ENCODE measurements at regions of chr11 and their contacts with region 1.

Region 1: DNA sequence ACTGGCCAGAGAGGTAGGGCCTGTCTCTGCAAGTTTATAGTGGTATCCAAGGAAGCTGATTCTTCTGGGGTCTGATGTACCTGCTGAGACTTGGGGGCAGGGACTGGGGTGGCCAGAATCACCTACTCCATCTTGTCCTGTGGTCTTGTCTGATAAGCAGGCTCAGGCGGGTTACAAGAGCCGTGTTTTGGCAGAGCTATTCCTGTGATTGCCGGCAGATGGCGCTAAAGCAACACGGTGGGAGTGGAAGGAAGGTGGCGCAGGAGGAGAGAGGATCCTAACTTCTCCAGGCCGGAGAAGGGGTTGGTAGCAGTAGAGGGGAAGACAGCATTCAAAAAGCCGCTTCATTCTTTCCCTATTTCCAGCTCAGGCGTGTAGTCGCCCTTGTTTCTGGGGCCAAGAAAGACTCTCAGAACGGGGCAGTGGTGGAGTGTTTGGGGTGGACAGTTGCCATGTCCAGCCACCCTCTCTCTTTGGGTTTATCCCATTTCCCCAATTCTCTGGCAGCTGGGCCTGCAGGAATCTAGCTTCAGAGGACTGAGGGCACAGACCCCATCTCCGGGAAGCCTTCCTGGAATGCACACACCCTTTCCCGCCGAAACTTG is 15.1 kb downstream of the CHRM1 start:
- DNase-seq: peak; percentile 86
- H3K4me3 ChIP-seq: no peak overlapping the region
- H3K27ac ChIP-seq: no peak overlapping the region
- H3K4me1 ChIP-seq: peaks cover 7% of the 10 kb centered on the region
- H3K27me3 ChIP-seq: peaks cover 0 to 2% of the 10 kb centered on the region in 2 experiments
- CTCF ChIP-seq: peak; percentile 97
- POLR2A ChIP-seq: no peak

Region 2: GRCh38 chr11:62645956-62646824 is 259.8 kb before region 1 on chr11 and contains the start of gene GANAB:
- CTCF ChIA-PET with region 1: no interaction called
- POLR2A ChIA-PET with region 1: no interaction called
- dilution Hi-C with region 1: no loop called
- intact Hi-C with region 1: no loop called
- DNase-seq: peak; percentile 97
- H3K4me3 ChIP-seq: peak within 1 kb of the TSS; percentile 62 to 87 (median 65)
- H3K27ac ChIP-seq: peak within 1 kb of the TSS; percentile 80
- H3K4me1 ChIP-seq: peaks cover 11% of the 10 kb centered on the region
- H3K27me3 ChIP-seq: no peaks in the 10 kb centered on the region
- CTCF ChIP-seq: no peak
- POLR2A ChIP-seq: peak; percentile 97
- total RNA-seq, gene GANAB: 357 and 389 TPM in 2 replicates

Region 3: DNA sequence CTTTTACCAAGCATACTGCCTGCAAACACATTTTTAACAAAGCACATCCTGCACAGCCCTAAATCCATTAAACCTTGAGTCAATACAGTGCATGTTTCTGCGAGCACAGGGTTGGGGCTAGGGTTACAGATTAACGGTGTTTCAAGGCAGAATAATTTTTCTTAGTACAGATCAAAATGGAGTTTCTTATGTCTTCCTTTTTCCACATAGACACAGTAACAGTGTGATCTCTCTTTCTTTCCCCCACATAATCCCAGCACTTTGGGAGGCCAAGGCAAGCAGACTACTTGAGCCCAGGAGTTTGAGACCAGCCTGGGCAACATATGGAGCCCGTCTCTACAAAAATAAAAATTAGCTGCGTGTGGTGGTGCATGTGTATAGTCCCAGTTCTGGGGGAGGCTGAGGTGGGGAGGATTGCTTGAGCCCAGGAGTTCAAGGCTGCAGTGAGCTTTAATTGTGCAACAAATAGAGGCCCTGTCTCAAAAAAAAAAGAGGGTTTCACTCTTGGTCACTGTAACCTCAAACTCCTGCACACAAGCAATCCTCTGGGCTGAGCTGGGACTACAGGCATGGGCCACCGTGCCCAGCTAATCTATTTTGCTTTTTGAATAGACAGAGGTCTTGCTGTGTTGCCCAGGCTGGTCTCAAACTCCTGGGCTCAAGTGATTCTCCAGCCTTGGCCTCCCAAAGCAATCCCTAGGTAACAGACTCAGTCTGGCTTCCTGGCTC is 45.0 kb before region 1 on chr11:
- CTCF ChIA-PET with region 1: no interaction called
- POLR2A ChIA-PET with region 1: no interaction called
- dilution Hi-C with region 1: no loop called
- intact Hi-C with region 1: no loop called
- DNase-seq: no peak
- H3K4me3 ChIP-seq: no peak overlapping the region
- H3K27ac ChIP-seq: no peak overlapping the region
- H3K4me1 ChIP-seq: peaks cover 6% of the 10 kb centered on the region
- H3K27me3 ChIP-seq: no peaks in the 10 kb centered on the region
- CTCF ChIP-seq: no peak
- POLR2A ChIP-seq: no peak

Region 4: GRCh38 chr11:62880803-62881578 is 25.0 kb before region 1 on chr11 and contains the start of gene SLC3A2:
- CTCF ChIA-PET with region 1: interaction called, 15 read pairs
- POLR2A ChIA-PET with region 1: interaction called, 4 read pairs
- dilution Hi-C with region 1: no loop called
- intact Hi-C with region 1: no loop called
- DNase-seq: peak; percentile 91
- H3K4me3 ChIP-seq: peak within 1 kb of the TSS; percentile 75 to 100 (median 95)
- H3K27ac ChIP-seq: peak within 1 kb of the TSS; percentile 100
- H3K4me1 ChIP-seq: peaks cover 45% of the 10 kb centered on the region
- H3K27me3 ChIP-seq: no peaks in the 10 kb centered on the region
- CTCF ChIP-seq: peak; percentile 63 to 89
- POLR2A ChIP-seq: peak; percentile 99
- total RNA-seq, gene SLC3A2: 190 and 208 TPM in 2 replicates

Region 5: DNA sequence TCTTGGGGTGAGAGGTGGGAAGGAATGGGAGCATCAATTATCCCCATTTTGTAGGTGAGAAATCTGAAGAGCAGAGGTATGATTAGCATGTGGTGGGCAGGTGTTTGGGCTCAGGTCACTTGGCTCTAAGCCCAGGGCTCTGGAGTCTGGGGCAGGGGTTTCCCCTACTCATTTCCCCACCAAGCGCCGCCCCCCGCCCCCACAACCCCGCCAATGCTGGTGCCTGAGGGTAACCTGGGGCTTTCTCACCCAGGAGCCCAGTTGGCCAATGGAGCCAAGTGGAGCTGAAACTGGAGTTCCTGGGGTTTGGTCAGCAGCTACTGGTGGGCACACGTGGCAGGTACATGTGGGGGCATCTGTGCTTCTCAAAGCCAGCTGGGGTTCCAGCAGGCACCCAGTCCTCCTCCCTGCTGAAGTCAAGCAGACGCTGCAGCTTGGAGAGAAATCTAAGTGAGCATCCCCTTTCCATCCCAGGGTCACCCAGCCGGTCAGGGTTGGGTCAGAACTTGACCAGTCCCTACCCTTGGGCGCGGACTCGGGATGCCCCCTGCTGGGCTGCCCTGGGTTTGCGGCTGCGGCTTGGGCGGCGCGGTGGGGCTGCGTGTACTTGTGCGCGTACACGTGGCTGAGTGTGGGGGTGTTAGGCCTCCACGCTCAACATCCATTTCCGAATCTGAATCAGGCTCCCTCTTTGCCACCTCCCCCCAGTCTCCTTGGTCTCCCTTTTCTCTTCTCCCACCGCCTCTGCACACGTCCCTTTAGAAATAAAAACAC is 16.8 kb after region 1 on chr11:
- CTCF ChIA-PET with region 1: interaction called, 51 read pairs
- POLR2A ChIA-PET with region 1: no interaction called
- dilution Hi-C with region 1: no loop called
- intact Hi-C with region 1: loop called (anchors 1 kb)
- DNase-seq: no peak
- H3K4me3 ChIP-seq: no peak overlapping the region
- H3K27ac ChIP-seq: no peak overlapping the region
- H3K4me1 ChIP-seq: peaks cover 6% of the 10 kb centered on the region
- H3K27me3 ChIP-seq: peaks cover 39 to 52% of the 10 kb centered on the region in 2 experiments
- CTCF ChIP-seq: peak; percentile 46 to 55
- POLR2A ChIP-seq: no peak

Region 6: GRCh38 chr11:63017306-63017974 is 111.4 kb after region 1 on chr11:
- CTCF ChIA-PET with region 1: interaction called, 488 read pairs
- POLR2A ChIA-PET with region 1: no interaction called
- dilution Hi-C with region 1: no loop called
- intact Hi-C with region 1: no loop called
- DNase-seq: peak; percentile 95
- H3K4me3 ChIP-seq: no peak overlapping the region
- H3K27ac ChIP-seq: no peak overlapping the region
- H3K4me1 ChIP-seq: peaks cover 10% of the 10 kb centered on the region
- H3K27me3 ChIP-seq: peaks cover 0 to 3% of the 10 kb centered on the region in 2 experiments
- CTCF ChIP-seq: no peak
- POLR2A ChIP-seq: peak; percentile 44

Region 7: DNA sequence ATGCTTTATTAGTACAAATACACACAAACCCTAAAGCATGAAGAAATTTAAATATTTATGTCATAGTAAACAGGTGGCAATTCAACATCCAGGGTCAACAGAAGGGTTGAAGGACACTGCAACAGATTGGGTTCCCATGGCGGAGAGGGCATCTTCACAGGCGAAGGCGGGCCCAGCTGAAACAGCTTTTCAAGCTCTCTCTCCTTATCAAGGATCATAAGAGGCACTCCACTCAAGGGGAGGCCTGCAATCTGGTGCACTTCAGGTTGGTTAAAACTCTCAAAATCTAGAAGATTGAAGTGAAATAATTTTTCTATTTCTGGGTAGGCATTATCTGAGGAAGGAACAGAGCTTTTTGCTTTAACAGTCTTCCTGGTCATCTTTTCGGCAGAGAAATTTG is 126.4 kb after region 1 on chr11:
- CTCF ChIA-PET with region 1: interaction called, 85 read pairs
- POLR2A ChIA-PET with region 1: no interaction called
- dilution Hi-C with region 1: no loop called
- intact Hi-C with region 1: no loop called
- DNase-seq: no peak
- H3K4me3 ChIP-seq: no peak overlapping the region
- H3K27ac ChIP-seq: no peak overlapping the region
- H3K4me1 ChIP-seq: no peaks in the 10 kb centered on the region
- H3K27me3 ChIP-seq: peaks cover 9 to 11% of the 10 kb centered on the region in 2 experiments
- CTCF ChIP-seq: no peak
- POLR2A ChIP-seq: no peak

Region 8: GRCh38 chr11:63179432-63180041 is 273.5 kb after region 1 on chr11:
- CTCF ChIA-PET with region 1: no interaction called
- POLR2A ChIA-PET with region 1: no interaction called
- dilution Hi-C with region 1: no loop called
- intact Hi-C with region 1: no loop called
- DNase-seq: peak; percentile 8
- H3K4me3 ChIP-seq: no peak overlapping the region
- H3K27ac ChIP-seq: no peak overlapping the region
- H3K4me1 ChIP-seq: peaks cover 5% of the 10 kb centered on the region
- H3K27me3 ChIP-seq: peaks cover 8 to 13% of the 10 kb centered on the region in 2 experiments
- CTCF ChIP-seq: no peak
- POLR2A ChIP-seq: no peak

Region 9: DNA sequence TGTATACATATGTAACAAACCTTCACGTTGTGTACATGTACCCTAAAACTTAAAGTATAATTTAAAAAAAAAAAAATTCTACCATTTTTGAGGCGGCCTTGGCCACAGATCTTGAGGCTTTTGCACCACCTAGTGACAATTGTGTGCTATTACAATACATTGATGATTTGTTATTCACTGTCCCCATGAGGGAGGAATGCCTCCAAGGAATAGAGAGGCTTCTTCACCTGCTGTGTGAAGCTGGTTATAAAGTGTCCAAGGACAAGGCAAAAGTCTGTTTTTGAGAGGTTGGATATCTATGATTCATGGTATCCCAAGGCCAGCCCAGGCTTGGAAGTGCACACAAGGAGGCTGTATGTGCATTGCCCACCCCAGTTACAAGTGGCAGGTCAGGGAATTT is 306.7 kb after region 1 on chr11:
- CTCF ChIA-PET with region 1: interaction called, 14 read pairs
- POLR2A ChIA-PET with region 1: no interaction called
- dilution Hi-C with region 1: no loop called
- intact Hi-C with region 1: loop called (anchors 1 kb)
- DNase-seq: peak; percentile 14
- H3K4me3 ChIP-seq: no peak overlapping the region
- H3K27ac ChIP-seq: no peak overlapping the region
- H3K4me1 ChIP-seq: no peaks in the 10 kb centered on the region
- H3K27me3 ChIP-seq: peaks cover 0 to 2% of the 10 kb centered on the region in 2 experiments
- CTCF ChIP-seq: peak; percentile 34 to 36
- POLR2A ChIP-seq: no peak